OCI-LY7 (cell line): ENCODE measurements at regions of chr11 and their contacts with region 1.

Region 1: DNA sequence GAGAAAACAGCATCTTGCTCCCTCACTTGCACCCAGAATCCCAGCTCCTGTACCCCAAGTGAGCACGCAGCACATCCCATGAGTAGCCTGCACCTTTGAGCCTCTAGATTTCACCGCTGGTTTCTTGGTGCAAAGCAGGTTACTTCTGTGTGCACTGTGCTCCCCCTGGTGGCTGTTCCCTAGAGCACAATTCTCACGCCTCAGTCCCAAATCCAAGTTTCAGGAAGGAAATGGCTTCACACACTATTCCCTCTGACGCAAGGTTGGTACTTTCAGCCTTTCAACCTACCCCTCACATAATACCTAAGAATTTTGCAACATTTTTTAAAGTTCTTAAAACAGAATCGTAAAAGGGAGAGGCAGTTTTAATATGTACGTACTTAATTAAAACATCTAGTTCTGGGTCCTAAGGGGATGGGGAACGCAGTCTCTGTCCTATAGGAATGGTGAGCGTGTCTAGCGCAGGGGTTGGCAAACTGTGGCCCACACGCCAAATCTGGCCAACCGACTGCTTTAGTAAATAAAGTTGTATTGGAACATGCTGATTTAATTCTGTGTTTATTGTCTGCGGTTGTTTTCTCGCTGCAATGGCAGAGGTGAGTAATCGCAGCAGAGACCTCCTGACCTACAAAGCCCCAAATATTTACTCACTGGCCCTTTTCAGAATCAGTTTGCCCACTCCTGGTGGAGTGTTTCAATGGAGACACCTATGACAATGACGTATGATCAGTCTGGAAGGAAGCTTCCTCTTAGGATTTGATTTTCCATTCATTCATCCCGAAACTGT is 27.5 kb downstream of the DHCR7 start:
- DNase-seq: peak; percentile 81
- H3K4me3 ChIP-seq: no peak overlapping the region
- H3K27ac ChIP-seq: no peak overlapping the region
- H3K4me1 ChIP-seq: peaks cover 64% of the 10 kb centered on the region
- CTCF ChIP-seq: peak; percentile 96

Region 2: DNA sequence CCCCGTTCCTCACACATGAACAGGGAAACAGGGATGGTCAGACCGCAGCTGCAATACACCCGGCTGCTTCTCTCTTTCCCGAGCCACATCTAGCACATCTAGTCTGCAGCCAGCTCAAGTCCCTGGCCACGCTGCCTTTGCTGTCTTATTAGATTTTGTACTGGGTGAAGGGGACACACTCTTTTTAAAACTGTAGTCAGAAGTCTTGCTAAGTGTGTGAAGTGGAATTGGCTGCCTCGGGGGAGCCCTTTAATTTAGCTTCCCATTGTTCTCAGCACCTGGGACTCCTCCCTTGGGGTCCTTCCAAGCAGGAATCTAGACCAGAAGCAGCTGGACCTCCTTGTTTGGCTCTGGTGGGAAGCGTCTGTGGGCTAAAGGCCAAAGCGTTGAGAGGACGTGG is 602.3 kb before region 1 on chr11:
- CTCF ChIA-PET with region 1: no interaction called
- POLR2A ChIA-PET with region 1: no interaction called
- intact Hi-C with region 1: loop called (anchors 5 kb)
- DNase-seq: no peak
- H3K4me3 ChIP-seq: no peak overlapping the region
- H3K27ac ChIP-seq: no peak overlapping the region
- H3K4me1 ChIP-seq: no peaks in the 10 kb centered on the region
- CTCF ChIP-seq: no peak

Region 3: DNA sequence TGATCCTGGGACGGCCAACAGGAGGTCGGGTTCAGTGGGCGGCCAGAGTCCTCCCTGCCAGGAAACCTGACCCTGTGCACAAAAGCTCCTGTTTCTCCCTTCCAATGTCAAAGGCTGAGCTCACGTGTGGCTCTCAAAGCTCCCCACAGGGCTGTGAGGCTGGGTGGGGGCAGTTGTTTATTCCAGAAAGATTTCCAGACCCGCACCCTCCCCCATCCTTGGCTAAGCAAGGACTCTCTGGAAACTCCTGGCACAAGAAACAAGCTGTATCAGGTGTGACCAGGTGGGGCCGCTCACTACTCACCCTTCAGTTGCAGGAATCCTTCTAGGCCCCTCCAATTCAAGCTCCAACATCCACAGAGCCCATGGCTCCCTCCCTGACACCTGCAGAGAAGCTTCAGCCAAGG is 300.2 kb before region 1 on chr11:
- CTCF ChIA-PET with region 1: no interaction called
- POLR2A ChIA-PET with region 1: no interaction called
- intact Hi-C with region 1: loop called (anchors 1 kb)
- DNase-seq: peak; percentile 29
- H3K4me3 ChIP-seq: no peak overlapping the region
- H3K27ac ChIP-seq: no peak overlapping the region
- H3K4me1 ChIP-seq: no peaks in the 10 kb centered on the region
- CTCF ChIP-seq: peak; percentile 66

Region 4: GRCh38 chr11:71251761-71252443 is 168.7 kb before region 1 on chr11:
- CTCF ChIA-PET with region 1: no interaction called
- POLR2A ChIA-PET with region 1: no interaction called
- intact Hi-C with region 1: loop called (anchors 10 kb)
- DNase-seq: peak; percentile 8
- H3K4me3 ChIP-seq: no peak overlapping the region
- H3K27ac ChIP-seq: no peak overlapping the region
- H3K4me1 ChIP-seq: no peaks in the 10 kb centered on the region
- CTCF ChIP-seq: peak; percentile 41

Region 5: DNA sequence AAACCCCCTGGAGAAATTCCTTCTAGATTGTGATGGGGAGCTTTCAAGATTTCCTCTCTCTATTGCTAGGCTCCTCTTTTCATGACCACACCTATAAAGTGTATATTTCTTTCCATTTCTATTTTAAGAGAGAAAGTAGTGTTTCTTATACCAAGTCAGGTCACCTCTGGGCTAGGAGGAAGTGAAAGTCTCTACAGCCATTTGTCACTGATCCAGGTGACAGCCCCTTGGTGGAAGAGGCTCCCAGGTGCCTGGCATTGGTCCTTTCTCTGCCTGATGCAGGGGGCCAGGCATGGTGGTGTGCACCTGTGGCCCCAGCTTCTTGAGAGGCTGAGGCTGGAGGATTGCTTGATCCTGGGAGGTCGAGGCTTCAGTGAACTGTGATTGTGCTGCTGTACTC is 37.2 kb before region 1 on chr11:
- CTCF ChIA-PET with region 1: no interaction called
- POLR2A ChIA-PET with region 1: interaction called, 5 read pairs
- intact Hi-C with region 1: loop called (anchors 2 kb)
- DNase-seq: peak; percentile 94
- H3K4me3 ChIP-seq: peak overlapping the region; percentile 40
- H3K27ac ChIP-seq: peak overlapping the region; percentile 92
- H3K4me1 ChIP-seq: peaks cover 60% of the 10 kb centered on the region
- CTCF ChIP-seq: no peak